ENCODE measurements at regions of chr4 and their contacts with region 1.

Region 1: GRCh38 chr4:95124906-95125504 is 367.2 kb downstream of the BMPR1B start:
- DNase-seq: no peak
- H3K4me3 ChIP-seq: no peak overlapping the region
- H3K27ac ChIP-seq: no peak overlapping the region
- H3K4me1 ChIP-seq: no peaks in the 10 kb centered on the region
- H3K27me3 ChIP-seq: no peaks in the 10 kb centered on the region
- CTCF ChIP-seq: peak in 3 of 5 experiments; percentile 24 to 38 (median 32)
- EP300 ChIP-seq: no peak
- POLR2A ChIP-seq: no peak

Region 2: DNA sequence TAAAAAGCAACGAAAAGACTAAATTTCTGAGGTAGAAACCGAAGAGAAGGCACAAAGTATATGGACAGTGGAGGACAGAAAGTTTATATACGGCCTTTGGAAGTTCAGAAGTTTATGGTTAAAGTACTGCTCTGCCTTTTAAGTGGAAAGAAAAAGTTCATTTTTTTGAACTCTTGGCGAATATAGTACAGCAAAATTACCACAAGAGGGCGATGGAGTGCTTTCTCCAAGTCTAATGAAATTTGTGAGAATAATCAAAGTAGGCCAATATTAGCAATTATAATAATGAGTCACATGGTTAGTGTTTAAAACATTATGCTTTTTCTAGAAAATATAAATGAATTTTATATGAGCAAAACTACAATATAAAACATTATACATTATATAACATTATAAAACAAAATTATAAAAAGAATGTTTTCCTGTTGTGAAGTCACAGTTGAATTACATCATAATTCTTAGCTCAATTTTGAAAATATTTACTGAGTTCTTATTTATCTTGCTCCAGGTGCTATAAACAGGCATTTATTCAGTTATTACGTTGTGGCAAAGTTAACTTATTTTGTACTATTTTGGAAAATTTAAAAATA is 503.4 kb before region 1 on chr4:
- in situ Hi-C with region 1: loop called (anchors 25 kb)
- intact Hi-C with region 1: no loop called
- DNase-seq: no peak
- H3K4me3 ChIP-seq: no peak overlapping the region
- H3K27ac ChIP-seq: no peak overlapping the region
- H3K4me1 ChIP-seq: peaks cover 0 to 8% (median 0%) of the 10 kb centered on the region in 4 donors
- H3K27me3 ChIP-seq: no peaks in the 10 kb centered on the region
- CTCF ChIP-seq: peak; percentile 63 to 79 (median 67)
- EP300 ChIP-seq: no peak
- POLR2A ChIP-seq: no peak

Region 3: DNA sequence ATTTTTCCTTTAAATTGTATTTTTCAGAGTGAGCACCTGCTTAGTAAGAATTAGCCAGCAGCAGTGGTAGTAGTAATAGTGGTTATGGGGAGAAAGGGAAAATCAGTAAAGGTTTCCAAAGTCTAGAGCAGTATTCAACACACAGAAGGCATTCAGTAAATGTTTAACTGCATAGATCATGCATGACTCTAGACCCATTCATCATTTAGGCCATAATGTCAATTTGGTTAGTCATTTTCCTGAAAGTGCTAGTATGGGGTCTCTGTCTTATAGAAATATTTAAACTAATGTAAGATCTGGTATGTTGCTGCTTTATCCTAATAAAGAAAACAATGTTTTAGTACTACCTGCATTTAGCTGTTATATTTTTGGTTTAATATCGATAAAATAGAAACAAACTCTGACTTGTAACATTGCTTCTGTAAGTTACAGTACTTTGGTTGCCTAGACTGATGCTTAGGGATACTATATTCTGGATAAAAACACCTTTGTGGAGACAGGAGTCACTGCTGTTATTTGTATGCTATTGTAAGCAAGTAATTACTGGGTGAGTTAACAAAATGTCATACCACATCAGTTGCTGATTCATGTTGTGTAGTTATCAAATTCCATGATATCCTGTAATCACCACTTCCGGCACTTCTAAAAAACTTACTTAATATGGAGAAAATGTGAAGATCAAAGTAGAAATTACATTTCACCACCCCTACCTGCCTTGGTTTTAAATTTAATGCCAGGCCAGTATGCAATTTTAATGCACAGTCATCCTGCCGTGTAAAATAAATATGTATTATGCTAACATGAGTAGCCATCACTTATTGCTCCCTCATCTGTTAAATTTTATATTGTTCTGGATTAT is 483.1 kb before region 1 on chr4:
- in situ Hi-C with region 1: loop called in 1 of 4 experiments (anchors 25 kb)
- intact Hi-C with region 1: no loop called
- DNase-seq: no peak
- H3K4me3 ChIP-seq: no peak overlapping the region
- H3K27ac ChIP-seq: no peak overlapping the region
- H3K4me1 ChIP-seq: no peaks in the 10 kb centered on the region
- H3K27me3 ChIP-seq: no peaks in the 10 kb centered on the region
- CTCF ChIP-seq: no peak
- EP300 ChIP-seq: no peak
- POLR2A ChIP-seq: no peak

Region 4: DNA sequence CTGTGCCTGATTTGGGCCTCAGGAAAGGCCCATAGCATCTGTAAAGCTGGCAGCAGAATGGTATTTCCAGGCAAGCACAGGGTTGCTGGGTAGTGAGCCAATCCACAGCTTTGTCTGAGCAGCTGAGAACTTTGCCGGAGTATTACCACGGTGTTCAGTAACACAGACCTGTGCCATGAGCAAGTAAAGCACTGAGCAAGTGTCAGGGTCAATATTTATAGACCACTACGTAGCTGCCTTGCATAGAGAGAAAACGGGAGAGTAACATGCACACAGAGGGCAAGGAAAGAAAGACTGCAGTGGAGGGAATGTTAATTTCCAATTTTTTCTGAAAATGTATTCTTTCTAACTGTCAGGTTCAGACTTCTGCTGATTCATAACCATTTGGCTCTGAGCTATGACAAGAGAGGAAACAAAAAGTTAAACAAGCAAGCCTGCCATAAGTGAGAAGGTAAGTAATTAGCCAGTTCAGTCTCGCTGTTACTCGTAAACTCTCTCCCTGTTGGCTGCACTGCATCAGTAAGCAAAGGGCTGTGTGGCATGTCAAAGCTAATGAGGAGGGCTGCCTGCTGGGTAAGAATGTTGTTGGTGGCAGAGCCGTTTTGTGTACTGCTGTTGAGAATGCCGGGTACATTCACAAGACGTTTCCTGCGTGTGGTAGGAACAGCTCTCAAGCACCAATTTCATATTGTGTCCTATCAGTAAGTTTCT is 129.2 kb before region 1 on chr4:
- in situ Hi-C with region 1: no loop called
- intact Hi-C with region 1: no loop called
- DNase-seq: no peak
- H3K4me3 ChIP-seq: no peak overlapping the region
- H3K27ac ChIP-seq: no peak overlapping the region
- H3K4me1 ChIP-seq: no peaks in the 10 kb centered on the region
- H3K27me3 ChIP-seq: no peaks in the 10 kb centered on the region
- CTCF ChIP-seq: no peak
- EP300 ChIP-seq: no peak
- POLR2A ChIP-seq: no peak